Activated CD4-positive, alpha-beta T cell treated with anti-CD3 and anti-CD28 coated beads, Interleukin-2, amount 10 ng/mL, durations not matched to agents 24 days and 14 days (primary cell): ENCODE measurements at regions of chr5 and their contacts with region 1.

Region 1: DNA sequence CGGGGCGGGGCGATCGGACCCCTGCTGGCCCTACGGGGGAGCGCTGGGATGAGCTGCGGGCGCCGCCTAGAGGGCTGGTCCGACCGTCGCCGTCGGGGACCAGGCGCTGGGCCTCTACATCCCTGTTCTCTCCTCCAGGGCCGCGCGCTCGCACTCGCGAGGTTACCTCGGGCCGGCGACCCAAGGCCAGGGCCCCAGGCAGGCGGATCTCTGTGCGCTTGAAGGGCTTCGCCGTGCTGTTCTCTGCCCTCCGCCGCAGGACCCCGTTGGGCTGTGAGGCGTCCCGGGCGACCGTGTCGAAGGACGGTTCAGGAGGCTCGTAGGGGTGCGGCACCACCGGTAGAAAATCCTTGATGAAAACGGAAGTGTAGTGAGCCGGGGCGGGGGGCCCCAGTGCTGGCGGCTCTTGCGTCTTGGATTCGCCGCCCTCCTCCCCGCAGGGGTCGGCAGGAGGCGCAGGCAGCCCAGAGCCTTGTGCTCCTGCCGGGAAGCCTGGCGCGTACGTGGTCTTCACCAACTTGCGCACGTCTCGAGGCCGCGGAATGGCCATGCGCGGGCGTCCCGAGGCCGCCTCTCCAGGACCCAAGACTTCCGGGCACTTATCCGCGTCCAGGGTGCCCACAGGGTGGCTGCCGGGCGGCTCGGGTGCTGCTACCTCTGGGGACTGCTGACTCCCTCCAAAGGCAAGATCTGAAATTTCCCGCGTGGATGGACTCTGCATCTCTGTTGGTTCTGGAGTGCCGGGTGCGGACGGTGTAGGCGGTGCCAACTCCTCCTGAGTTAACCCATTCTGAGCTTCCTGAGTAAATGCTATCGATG is 2.0 kb downstream of the PROB1 start:
- DNase-seq: peak; percentile 96
- H3K4me3 Mint-ChIP-seq: peak overlapping the region; percentile 99
- H3K27ac Mint-ChIP-seq: peak overlapping the region; percentile 97
- H3K4me1 Mint-ChIP-seq: peaks cover 53% of the 10 kb centered on the region
- H3K27me3 Mint-ChIP-seq: no peaks in the 10 kb centered on the region

Region 2: DNA sequence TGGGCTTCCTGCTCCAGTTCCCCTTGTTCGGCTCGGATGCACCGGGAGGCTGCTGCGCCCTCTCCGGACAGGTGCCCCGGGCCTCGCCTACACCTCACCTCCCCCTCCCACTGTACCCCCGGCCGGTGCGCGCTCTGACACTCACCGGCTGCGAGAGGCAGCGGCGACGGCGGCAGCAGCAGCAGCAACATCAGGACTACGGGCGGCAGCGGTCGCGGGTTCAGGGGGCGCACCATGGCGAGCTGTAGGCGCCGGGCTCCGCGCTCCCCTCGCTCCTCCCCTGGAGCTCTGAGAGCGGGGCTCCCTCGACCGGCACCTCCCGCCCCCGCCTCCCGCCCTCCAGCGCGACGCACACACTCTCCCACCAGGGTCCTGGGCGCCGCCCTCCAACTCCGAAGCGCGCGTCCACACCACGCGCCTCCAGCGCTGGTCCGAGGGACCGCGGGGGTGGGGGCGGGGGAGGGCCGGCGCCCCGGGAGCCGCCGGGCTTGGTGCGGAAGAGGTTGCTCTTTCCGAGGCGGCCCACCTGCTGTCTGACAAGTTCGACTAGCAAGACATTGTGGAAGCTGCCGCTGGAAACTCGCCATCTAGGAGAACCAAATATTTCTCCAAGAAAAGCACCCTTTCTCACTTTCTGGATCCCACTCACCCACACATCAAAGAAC is 1118.6 kb before region 1 on chr5 and contains the start of gene GFRA3:
- intact Hi-C with region 1: no loop called
- DNase-seq: peak; percentile 59
- H3K4me3 Mint-ChIP-seq: peak within 1 kb of the TSS; percentile 52
- H3K27ac Mint-ChIP-seq: no peak within 1 kb of the TSS
- H3K4me1 Mint-ChIP-seq: peaks cover 4% of the 10 kb centered on the region
- H3K27me3 Mint-ChIP-seq: peaks cover 32% of the 10 kb centered on the region
- total RNA-seq, gene GFRA3: not detected in 2 replicates

Region 3: DNA sequence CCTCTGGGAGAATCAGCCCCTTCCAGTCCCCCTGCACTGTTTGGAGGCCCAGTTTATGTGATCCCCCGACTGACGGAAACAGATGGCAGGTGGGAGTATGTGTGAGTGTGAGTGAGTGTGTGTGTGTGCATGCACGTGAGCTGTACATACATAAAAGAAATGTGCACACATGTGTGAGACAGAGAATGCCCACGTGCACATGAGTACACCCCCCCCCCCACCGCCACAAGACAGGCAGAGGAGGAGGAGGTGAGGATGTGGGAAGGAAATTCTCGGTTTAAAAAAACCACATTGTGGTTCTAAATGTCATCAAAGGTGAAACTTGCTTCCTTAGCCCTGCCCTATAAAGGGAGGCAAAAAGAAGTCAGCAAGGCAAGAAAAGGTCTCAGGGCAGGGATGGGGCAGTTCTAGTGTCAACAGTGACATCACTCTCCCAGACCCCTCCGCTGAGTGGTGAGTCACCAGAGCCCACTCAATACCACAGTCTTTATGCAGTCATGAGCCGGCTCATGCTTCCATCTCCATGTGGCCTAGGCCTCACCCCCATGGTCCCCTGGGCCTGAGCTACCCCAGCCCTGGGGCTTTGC is 738.5 kb before region 1 on chr5:
- intact Hi-C with region 1: loop called (anchors 5 kb)
- DNase-seq: peak; percentile 87
- H3K4me3 Mint-ChIP-seq: peak overlapping the region; percentile 42
- H3K27ac Mint-ChIP-seq: peak overlapping the region; percentile 83
- H3K4me1 Mint-ChIP-seq: peaks cover 14% of the 10 kb centered on the region
- H3K27me3 Mint-ChIP-seq: peaks cover 86% of the 10 kb centered on the region

Region 4: GRCh38 chr5:139293504-139294373 is 99.1 kb before region 1 on chr5 and contains the start of gene MATR3:
- intact Hi-C with region 1: loop called (anchors 2 kb)
- DNase-seq: peak; percentile 97
- H3K4me3 Mint-ChIP-seq: peak within 1 kb of the TSS; percentile 96
- H3K27ac Mint-ChIP-seq: peak within 1 kb of the TSS; percentile 97
- H3K4me1 Mint-ChIP-seq: peaks cover 38% of the 10 kb centered on the region
- H3K27me3 Mint-ChIP-seq: no peaks in the 10 kb centered on the region
- total RNA-seq, gene MATR3: 243 and 258 TPM in 2 replicates

Region 5: GRCh38 chr5:139403787-139404483 is 11.0 kb after region 1 on chr5 and contains the start of gene SPATA24:
- intact Hi-C with region 1: loop called (anchors 1 kb)
- DNase-seq: peak; percentile 99
- H3K4me3 Mint-ChIP-seq: peak within 1 kb of the TSS; percentile 87
- H3K27ac Mint-ChIP-seq: peak within 1 kb of the TSS; percentile 99
- H3K4me1 Mint-ChIP-seq: peaks cover 37% of the 10 kb centered on the region
- H3K27me3 Mint-ChIP-seq: no peaks in the 10 kb centered on the region
- total RNA-seq, gene SPATA24: 4.2 TPM in 2 replicates

Region 6: GRCh38 chr5:139492700-139493192 is 99.9 kb after region 1 on chr5:
- intact Hi-C with region 1: no loop called
- DNase-seq: peak; percentile 65
- H3K4me3 Mint-ChIP-seq: peak overlapping the region; percentile 35
- H3K27ac Mint-ChIP-seq: peak overlapping the region; percentile 51
- H3K4me1 Mint-ChIP-seq: peaks cover 29% of the 10 kb centered on the region
- H3K27me3 Mint-ChIP-seq: no peaks in the 10 kb centered on the region